ENCODE measurements at regions of chr3 and their contacts with region 1.

Region 1: DNA sequence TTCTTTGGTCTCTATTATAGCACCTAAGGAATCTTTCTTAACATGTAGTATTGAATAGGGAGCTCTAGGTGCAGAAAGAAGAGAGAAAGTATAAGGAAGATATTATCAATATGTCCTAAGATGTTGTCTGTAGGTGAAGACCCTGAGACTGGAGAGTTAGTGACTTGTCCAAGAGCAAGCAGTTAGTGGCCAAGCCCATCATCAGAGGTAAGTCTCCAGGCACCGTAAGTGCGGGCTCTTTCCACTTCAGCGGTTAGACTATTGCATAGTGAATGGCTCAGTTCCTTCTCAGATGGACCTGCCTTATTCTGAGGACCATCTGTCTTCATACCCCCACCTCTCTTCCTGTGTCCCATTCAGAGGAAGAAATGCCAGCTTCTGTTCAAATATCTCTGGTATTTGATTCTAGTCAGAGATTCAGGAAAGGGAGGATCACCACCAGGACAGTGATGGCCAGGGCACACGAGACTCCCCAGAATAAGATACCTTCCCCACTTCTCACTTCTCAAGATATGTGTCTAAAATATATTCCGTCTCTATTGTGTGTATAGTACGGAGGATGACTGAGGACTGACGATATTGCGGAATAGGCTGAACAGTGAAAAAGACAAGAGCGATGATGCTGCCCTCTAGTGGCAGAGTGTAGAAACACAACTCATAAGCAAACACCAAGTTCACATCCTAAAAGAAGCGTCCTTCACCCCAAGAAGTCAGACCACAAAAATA is 19.1 kb upstream of the ADGRG7 start:
- DNase-seq: peak; percentile 29 to 32
- ATAC-seq: peak; percentile 66 to 87
- H3K4me3 ChIP-seq: peak overlapping the region in 1 of 4 donors; percentile 38
- H3K27ac ChIP-seq: no peak overlapping the region
- H3K4me1 ChIP-seq: no peaks in the 10 kb centered on the region
- H3K27me3 ChIP-seq: no peaks in the 10 kb centered on the region
- CTCF ChIP-seq: peak; percentile 72 to 88 (median 82)
- POLR2A ChIP-seq: no peak

Region 2: GRCh38 chr3:99833617-99834205 is 756.6 kb before region 1 on chr3:
- in situ Hi-C with region 1: loop called (anchors 5 to 10 kb)
- intact Hi-C with region 1: no loop called
- DNase-seq: no peak
- ATAC-seq: no peak
- H3K4me3 ChIP-seq: no peak overlapping the region
- H3K27ac ChIP-seq: peak overlapping the region; percentile 4 to 66 (median 48)
- H3K4me1 ChIP-seq: peaks cover 7 to 12% of the 10 kb centered on the region in 2 donors
- H3K27me3 ChIP-seq: no peaks in the 10 kb centered on the region
- CTCF ChIP-seq: no peak
- POLR2A ChIP-seq: no peak

Region 3: GRCh38 chr3:100316641-100317069 is 273.6 kb before region 1 on chr3:
- in situ Hi-C with region 1: loop called in 3 of 4 experiments (anchors 25 kb)
- intact Hi-C with region 1: loop called (anchors 5 kb)
- DNase-seq: no peak
- ATAC-seq: peak in 1 of 2 donors; percentile 76
- H3K4me3 ChIP-seq: no peak overlapping the region
- H3K27ac ChIP-seq: peak overlapping the region in 2 of 4 donors; percentile 7 to 23
- H3K4me1 ChIP-seq: no peaks in the 10 kb centered on the region
- H3K27me3 ChIP-seq: no peaks in the 10 kb centered on the region
- CTCF ChIP-seq: peak; percentile 42 to 64 (median 53)
- POLR2A ChIP-seq: no peak

Region 4: GRCh38 chr3:100334488-100335351 is 255.6 kb before region 1 on chr3 and contains the start of gene NIT2:
- in situ Hi-C with region 1: loop called in 1 of 4 experiments (anchors 25 kb)
- intact Hi-C with region 1: no loop called
- DNase-seq: peak; percentile 69 to 85
- ATAC-seq: peak; percentile 89 to 91
- H3K4me3 ChIP-seq: peak within 1 kb of the TSS; percentile 59 to 68 (median 64)
- H3K27ac ChIP-seq: peak within 1 kb of the TSS; percentile 85 to 89 (median 88)
- H3K4me1 ChIP-seq: peaks cover 0 to 10% of the 10 kb centered on the region in 2 donors
- H3K27me3 ChIP-seq: no peaks in the 10 kb centered on the region
- CTCF ChIP-seq: peak in 1 of 5 experiments; percentile 15
- POLR2A ChIP-seq: peak; percentile 76 to 78
- total RNA-seq, gene NIT2: 13.5 to 45.2 (median 24.2) TPM

Region 5: DNA sequence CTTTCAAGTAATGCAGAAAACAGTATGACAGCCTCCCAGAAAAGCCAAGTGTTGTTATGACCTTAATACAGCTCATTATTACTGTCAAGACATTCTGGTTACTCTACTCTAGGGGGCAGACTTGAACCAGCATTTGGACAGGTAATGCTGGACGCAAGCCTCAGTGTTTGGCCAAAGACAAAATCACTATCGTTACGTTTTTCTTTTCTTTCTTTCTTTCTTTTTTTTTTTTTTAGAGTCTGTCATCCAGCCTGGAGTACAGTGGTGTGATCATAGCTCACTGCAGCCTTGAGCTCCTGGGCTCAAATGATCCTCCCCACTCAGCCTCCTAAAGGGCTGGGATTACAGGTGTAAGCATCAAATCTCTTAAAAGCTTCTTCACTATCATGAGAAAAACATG is 127.3 kb before region 1 on chr3:
- in situ Hi-C with region 1: loop called (anchors 5 kb)
- intact Hi-C with region 1: loop called (anchors 1 kb)
- DNase-seq: no peak
- ATAC-seq: peak; percentile 73 to 83
- H3K4me3 ChIP-seq: no peak overlapping the region
- H3K27ac ChIP-seq: no peak overlapping the region
- H3K4me1 ChIP-seq: no peaks in the 10 kb centered on the region
- H3K27me3 ChIP-seq: no peaks in the 10 kb centered on the region
- CTCF ChIP-seq: peak; percentile 26 to 65 (median 54)
- POLR2A ChIP-seq: no peak

Measured in gastrocnemius medialis (tissue), 4 donors.